GM10248 (cell line): ENCODE measurements at regions of chr11 and their contacts with region 1.

Region 1: GRCh38 chr11:116732271-116733042 is 40.3 kb downstream of the BUD13 start:
- DNase-seq: peak; percentile 90
- CTCF ChIP-seq: peak; percentile 84

Region 2: DNA sequence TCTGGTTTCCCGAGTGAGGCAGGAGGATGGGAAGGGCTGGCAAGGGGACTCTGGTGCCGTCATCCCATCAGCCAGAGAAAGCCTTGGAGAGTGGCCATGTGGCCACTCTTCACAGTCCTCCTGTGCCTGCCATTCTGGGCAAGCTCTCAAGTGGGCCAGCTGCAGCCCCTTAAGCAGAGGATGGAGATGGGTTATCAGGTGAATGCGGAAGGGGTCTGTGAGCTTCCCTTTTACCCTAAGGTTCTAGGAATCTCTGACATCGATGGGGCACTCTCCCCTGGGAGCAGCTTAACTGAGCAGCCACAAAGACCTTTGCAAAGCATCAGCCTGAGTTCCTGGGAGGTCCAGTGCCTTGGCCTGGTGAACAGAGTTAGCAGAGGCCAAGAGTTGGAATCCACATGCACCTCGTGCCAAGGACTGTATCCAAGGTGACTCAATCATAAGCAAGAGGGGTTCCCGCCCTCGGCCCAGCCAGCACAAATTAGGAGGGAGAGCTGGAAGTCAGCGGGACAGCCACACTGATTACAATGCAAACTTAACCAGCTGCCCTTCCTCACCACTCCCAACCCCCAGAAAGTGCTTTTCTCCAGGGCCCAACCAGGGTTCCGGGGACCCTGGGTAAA is 153.3 kb before region 1 on chr11:
- CTCF ChIA-PET with region 1: no interaction called
- POLR2A ChIA-PET with region 1: no interaction called
- DNase-seq: no peak
- CTCF ChIP-seq: no peak

Region 3: GRCh38 chr11:116712428-116712827 is 20.0 kb before region 1 on chr11:
- CTCF ChIA-PET with region 1: interaction called, 10 read pairs
- POLR2A ChIA-PET with region 1: no interaction called
- DNase-seq: no peak
- CTCF ChIP-seq: no peak

Region 4: DNA sequence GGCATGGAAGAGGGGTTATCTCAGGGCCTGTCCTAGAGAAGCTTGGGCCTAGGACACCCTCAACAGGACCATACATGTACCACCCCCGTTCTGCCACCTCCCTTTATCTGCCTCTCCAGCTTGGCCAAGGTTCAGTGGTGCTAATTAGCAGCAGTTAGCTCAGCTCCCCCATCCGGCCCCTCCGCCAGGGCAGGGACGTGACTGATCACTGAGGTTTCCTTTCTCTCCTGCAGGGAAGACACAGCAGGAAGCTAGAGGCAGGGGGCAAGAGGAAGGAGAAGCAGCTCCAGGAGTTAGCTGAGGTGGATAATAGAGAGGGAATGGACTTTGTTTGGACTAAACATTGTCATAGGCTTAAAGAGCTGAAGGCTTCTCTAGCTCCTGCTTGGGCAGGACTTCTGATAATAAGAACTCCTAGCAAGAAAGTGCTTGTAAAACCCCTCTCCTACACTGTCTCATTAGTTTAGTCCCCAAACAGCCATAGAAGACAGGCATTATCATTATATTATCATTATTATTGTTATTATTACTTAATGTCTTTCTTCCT is 13.4 kb before region 1 on chr11:
- CTCF ChIA-PET with region 1: interaction called, 11 read pairs
- POLR2A ChIA-PET with region 1: no interaction called
- DNase-seq: no peak
- CTCF ChIP-seq: no peak

Region 5: DNA sequence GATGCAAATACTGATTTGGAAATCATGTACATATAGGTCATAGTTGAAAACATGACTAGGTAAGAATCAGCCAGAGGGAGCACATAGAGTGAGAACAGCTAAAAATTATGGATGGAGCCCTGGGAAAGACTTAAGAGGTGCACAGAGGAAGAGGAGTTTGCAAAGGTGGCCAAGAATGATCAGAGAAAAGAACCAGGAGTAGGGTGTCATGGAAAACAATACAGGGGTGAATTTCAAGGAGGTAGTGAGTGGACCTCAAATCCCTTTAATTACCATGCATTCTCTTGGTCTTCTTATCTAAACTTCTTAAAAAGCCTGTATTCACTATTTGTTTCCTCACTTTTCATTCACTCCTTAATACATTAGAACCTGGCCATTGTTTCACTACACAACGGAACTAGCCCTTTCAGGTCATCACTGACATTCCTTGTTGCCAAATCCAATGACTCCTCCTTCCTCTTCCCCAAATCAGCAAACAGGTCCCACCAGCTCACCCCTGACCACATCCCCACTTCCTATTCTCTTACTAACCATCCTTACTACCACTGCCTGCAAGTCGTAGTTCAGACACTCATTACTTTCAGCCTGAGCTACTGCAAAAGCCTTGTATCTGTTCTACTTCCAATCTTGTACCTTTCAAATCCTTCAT is 17.7 kb after region 1 on chr11:
- CTCF ChIA-PET with region 1: interaction called, 97 read pairs
- POLR2A ChIA-PET with region 1: no interaction called
- DNase-seq: no peak
- CTCF ChIP-seq: no peak

Region 6: GRCh38 chr11:116835791-116836631 is 103.6 kb after region 1 on chr11:
- CTCF ChIA-PET with region 1: interaction called, 12 read pairs
- POLR2A ChIA-PET with region 1: no interaction called
- DNase-seq: peak; percentile 90
- CTCF ChIP-seq: peak; percentile 77

Region 7: DNA sequence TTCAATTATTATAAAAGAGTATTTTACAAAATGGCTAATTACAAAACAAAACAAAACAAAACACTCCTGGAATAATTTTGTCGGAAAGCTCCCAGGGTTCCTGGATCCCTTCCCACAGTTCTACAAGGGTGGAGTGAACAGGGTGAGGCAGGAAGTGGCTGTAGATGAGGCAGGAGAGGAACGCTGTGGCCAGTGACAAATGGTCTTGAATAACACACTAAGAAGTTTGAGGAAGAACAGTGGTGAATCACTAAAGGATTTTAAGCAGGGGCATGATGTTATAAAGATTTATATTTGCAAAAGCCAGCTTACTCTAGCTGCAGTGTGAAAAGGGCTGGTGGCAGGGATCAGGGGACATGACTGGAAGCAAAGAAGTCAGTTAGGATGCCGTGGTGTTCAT is 138.8 kb after region 1 on chr11:
- CTCF ChIA-PET with region 1: no interaction called
- POLR2A ChIA-PET with region 1: no interaction called
- DNase-seq: no peak
- CTCF ChIP-seq: no peak